CD8-positive, alpha-beta T cell (primary cell): ENCODE measurements at regions of chr6 and their contacts with region 1.

Region 1: DNA sequence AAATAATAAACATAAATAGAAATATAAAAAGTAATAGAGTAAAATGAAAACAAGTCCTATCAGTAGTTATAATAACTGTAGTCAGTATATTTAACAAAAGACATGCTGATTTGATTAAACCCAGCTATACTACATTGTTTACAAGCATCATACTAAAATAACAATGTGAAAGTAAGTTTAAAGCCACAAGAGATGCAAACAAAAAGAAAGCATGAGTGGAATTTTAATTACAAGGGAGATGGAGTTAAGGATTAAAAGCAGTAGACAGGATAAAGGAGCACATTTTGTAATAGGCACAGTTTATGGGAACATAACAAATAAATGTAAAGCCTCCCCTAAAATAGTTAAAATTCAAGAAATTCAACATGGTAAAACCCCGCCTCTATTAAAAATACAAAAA is 41.5 kb downstream of the SENP6 start:
- DNase-seq: no peak
- ATAC-seq: no peak
- H3K4me3 ChIP-seq: no peak overlapping the region
- H3K4me3 Mint-ChIP-seq: no peak overlapping the region
- H3K27ac ChIP-seq: no peak overlapping the region
- H3K27ac Mint-ChIP-seq: no peak overlapping the region
- H3K4me1 ChIP-seq: no peaks in the 10 kb centered on the region
- H3K4me1 Mint-ChIP-seq: peaks cover 5% of the 10 kb centered on the region
- H3K27me3 ChIP-seq: no peaks in the 10 kb centered on the region
- H3K27me3 Mint-ChIP-seq: no peaks in the 10 kb centered on the region
- CTCF ChIP-seq: no peak

Region 2: DNA sequence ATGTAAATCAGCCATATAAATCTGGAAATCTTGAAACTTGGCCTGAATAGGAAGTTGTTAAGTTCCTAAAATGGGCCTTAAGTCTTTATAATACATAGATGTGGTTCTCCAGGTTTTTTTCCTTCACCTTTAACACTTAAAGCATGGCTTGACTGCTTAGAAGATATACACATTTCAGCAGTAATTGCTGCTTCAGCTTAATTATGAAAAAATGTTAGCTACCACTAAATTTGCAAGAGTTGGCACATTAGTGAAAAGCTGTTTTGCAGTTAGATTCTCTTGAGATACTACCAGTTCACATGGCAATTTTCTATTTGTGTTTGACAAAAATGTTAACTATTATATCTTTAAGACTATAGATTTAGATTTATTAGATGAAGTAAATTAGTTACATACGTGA is 33.2 kb after region 1 on chr6:
- CTCF ChIA-PET with region 1: no interaction called
- POLR2A ChIA-PET with region 1: no interaction called
- intact Hi-C with region 1: loop called in 1 of 2 experiments (anchors 5 kb)
- DNase-seq: no peak
- ATAC-seq: no peak
- H3K4me3 ChIP-seq: no peak overlapping the region
- H3K4me3 Mint-ChIP-seq: no peak overlapping the region
- H3K27ac ChIP-seq: no peak overlapping the region
- H3K27ac Mint-ChIP-seq: no peak overlapping the region
- H3K4me1 ChIP-seq: no peaks in the 10 kb centered on the region
- H3K4me1 Mint-ChIP-seq: no peaks in the 10 kb centered on the region
- H3K27me3 ChIP-seq: no peaks in the 10 kb centered on the region
- H3K27me3 Mint-ChIP-seq: no peaks in the 10 kb centered on the region
- CTCF ChIP-seq: no peak